Thyroid gland (tissue), 4 donors: ENCODE measurements at regions of chr14 and their contacts with region 1.

Region 1: DNA sequence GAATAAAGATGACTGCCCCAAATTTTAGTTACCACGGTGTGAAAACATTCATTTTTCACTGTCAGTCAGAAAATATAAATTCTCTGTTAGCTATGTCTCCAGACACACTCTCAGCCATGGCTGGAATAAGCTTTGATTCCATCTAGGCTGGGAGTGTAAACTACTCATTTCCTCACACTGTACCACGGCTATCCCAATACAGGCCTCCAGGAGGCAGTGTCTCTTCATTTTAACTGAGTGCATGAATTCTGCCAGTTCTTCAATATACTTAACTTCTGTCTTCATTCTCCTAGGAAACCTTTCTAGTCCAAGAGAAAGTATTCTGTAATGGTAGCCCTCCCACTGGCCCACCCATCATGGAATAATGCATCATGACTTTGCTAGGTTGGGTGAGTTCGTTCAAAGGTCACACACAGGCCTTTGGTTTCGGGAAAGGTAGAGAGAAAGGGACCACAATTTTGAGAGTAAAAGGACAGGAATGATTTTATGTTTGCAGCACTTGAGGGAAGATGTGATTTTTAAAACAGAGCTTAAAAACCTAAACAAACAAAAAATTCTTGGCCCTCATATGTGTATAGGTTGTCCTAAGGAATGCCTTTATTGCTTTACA is 381.1 kb downstream of the SEC23A start:
- DNase-seq: peak; percentile 71 to 78
- H3K4me3 ChIP-seq: no peak overlapping the region
- H3K27ac ChIP-seq: no peak overlapping the region
- H3K4me1 ChIP-seq: peaks cover 19 to 25% of the 10 kb centered on the region in 2 donors
- H3K27me3 ChIP-seq: no peaks in the 10 kb centered on the region
- CTCF ChIP-seq: peak; percentile 46 to 92 (median 78)
- POLR2A ChIP-seq: no peak

Region 2: DNA sequence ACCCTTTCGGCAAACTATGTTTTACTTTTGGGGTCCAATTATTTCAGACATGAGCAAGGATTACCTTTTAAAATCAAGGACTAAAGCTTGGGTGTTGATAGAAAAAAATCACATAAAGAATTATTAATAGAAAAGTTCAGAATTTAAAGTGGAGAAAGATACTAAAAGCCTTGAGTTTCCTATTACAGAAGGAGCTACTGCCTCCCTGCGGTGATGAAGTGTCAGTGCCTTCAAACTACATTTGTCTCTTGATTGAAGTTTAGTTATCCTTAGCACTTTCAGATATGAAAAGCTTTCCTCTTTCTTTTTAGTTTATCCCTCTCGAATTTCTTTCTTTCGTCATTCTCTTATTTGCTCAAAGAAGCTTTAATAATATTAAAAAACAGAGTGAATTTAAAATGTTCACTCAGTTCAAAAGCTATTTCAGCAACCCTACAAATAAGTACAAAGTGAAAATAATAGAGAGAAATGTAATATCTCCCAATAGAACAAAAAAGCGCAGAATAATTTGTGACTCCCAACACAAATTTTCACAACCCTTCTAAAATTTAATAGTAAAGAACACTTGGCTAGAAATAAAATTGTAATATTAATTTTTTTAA is 293.5 kb after region 1 on chr14:
- intact Hi-C with region 1: loop called (anchors 10 kb)
- DNase-seq: peak; percentile 19 to 33
- H3K4me3 ChIP-seq: no peak overlapping the region
- H3K27ac ChIP-seq: no peak overlapping the region
- H3K4me1 ChIP-seq: no peaks in the 10 kb centered on the region
- H3K27me3 ChIP-seq: no peaks in the 10 kb centered on the region
- CTCF ChIP-seq: peak; percentile 49 to 86 (median 60)
- POLR2A ChIP-seq: no peak